Activated naive CD4-positive, alpha-beta T cell treated with anti-CD3 and anti-CD28 coated beads for 36 hours (primary cell): ENCODE measurements at regions of chr10 and their contacts with region 1.

Region 1: DNA sequence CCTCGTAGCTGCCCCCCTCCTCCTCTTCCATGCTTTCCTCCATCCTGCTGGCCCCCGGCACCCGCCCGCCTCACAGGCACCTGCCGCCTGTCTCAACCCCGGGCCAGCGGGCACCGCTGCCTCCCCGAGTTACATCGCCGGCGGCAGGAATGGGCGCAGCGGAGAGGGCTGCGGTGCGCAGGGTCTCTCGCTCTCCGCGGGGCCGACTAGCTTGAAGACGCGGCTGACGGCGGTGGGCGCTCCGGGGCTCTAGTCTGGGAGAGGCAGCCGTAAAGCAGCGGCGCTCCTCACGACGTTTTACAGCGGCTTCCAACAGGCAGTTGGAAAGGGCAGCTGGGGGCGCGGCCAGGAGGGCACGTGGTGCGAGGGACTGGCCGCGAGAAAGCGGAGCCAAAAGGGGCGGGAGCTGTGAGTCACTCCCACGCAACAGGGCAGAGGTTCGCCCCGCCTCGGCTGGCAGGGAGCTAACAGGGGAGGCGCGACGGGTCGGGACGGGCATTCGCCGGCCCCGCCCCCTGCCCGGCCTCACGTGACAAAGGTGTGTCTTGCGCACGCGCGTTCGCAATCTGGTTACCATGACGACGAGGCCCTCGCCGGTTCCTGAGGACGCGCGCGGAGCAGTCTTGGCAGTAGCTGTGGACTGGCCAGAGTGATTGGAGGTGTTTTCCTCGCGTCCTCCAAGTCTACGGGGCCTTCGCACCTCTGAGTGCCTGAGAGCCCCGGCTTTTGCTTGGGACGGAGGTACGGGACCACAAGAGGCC is at the start of gene CACUL1:
- DNase-seq: peak; percentile 99
- H3K4me3 Mint-ChIP-seq: peak within 1 kb of the TSS; percentile 95
- H3K27ac Mint-ChIP-seq: peak within 1 kb of the TSS; percentile 82
- H3K4me1 Mint-ChIP-seq: peaks cover 36% of the 10 kb centered on the region
- H3K27me3 Mint-ChIP-seq: no peaks in the 10 kb centered on the region
- total RNA-seq, gene CACUL1: 18.4 to 19.2 TPM

Region 2: GRCh38 chr10:117653170-117653515 is 1101.8 kb before region 1 on chr10:
- CTCF ChIA-PET with region 1: no interaction called
- intact Hi-C with region 1: loop called (anchors 10 kb)
- DNase-seq: peak; percentile 65
- H3K4me3 Mint-ChIP-seq: no peak overlapping the region
- H3K27ac Mint-ChIP-seq: no peak overlapping the region
- H3K4me1 Mint-ChIP-seq: peaks cover 25% of the 10 kb centered on the region
- H3K27me3 Mint-ChIP-seq: peaks cover 26% of the 10 kb centered on the region

Region 3: DNA sequence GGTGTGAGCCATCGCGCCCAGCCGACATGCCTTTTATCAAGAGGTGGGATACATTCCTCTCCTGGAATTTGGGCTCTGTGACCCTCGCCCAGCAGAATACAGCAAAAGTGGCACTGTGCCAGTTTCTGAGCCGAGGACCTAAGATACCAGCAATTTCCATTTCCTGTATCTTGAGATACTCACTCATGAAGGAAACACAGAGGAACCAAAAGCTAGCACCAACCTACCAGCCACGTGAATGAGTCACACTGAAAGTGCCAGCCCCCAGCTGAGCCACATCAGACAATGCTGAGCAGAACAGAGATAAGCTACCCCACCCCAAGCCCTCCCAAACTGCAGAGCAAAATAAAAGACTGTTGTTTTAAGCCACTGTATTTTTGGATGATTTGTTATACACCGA is 56.5 kb before region 1 on chr10:
- CTCF ChIA-PET with region 1: no interaction called
- intact Hi-C with region 1: loop called (anchors 1 kb)
- DNase-seq: peak; percentile 90
- H3K4me3 Mint-ChIP-seq: no peak overlapping the region
- H3K27ac Mint-ChIP-seq: peak overlapping the region; percentile 32
- H3K4me1 Mint-ChIP-seq: peaks cover 49% of the 10 kb centered on the region
- H3K27me3 Mint-ChIP-seq: no peaks in the 10 kb centered on the region

Region 4: GRCh38 chr10:119028900-119029612 is 274.2 kb after region 1 on chr10:
- CTCF ChIA-PET with region 1: no interaction called
- intact Hi-C with region 1: loop called (anchors 1 kb)
- DNase-seq: peak; percentile 73
- H3K4me3 Mint-ChIP-seq: peak overlapping the region; percentile 66
- H3K27ac Mint-ChIP-seq: no peak overlapping the region
- H3K4me1 Mint-ChIP-seq: peaks cover 16% of the 10 kb centered on the region
- H3K27me3 Mint-ChIP-seq: peaks cover 4% of the 10 kb centered on the region

Region 5: GRCh38 chr10:119178372-119179119 is 423.6 kb after region 1 on chr10 and contains the start of gene PRDX3:
- CTCF ChIA-PET with region 1: no interaction called
- intact Hi-C with region 1: loop called (anchors 1 kb)
- DNase-seq: peak; percentile 96
- H3K4me3 Mint-ChIP-seq: peak within 1 kb of the TSS; percentile 93
- H3K27ac Mint-ChIP-seq: peak within 1 kb of the TSS; percentile 95
- H3K4me1 Mint-ChIP-seq: peaks cover 42% of the 10 kb centered on the region
- H3K27me3 Mint-ChIP-seq: no peaks in the 10 kb centered on the region
- total RNA-seq, gene PRDX3: 215 to 216 TPM

Region 6: DNA sequence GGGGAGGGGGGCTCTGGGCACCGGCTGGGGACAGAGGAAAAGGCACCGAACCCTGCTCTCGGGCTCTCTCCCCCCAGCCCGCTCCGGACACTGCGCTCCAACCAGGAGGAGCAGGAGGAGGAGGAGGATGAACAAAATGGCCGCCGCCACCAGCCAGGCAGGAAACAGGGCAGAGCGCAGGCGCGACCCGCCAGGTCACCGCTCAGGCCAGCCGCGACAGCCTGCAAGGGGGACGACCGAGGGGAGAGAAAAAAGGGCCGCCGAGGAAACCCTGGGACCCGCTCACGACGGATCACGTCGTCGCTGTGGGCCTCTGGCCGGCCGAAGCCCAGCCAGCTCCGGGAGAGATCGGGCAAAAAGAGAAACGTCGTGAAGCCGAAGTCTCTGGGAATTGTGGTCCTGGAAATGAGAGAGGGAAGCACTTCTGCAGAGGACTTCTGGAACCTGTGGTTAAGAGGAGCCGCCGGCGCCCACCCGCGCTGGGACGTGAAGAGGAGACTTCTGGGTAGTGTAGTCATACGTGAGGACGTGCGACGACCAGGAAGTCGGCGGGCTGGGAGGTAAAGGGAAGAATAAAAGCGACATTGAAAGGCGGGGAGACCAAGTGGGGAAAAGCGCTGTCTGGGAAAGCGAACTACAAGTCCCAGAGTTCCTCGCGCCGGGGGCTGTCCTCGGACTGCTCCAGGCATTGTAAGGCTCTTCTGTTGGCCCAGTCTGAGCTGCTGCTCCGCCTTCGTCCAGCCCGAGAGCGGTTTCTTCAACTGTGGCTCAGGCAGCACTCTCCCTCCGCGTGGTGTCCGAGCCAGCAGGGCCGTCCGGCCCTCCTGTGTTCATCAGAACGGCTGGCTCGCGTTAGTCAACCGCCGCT is 841.9 kb after region 1 on chr10 and contains the start of gene TIAL1:
- CTCF ChIA-PET with region 1: no interaction called
- intact Hi-C with region 1: loop called (anchors 1 kb)
- DNase-seq: peak; percentile 98
- H3K4me3 Mint-ChIP-seq: peak within 1 kb of the TSS; percentile 93
- H3K27ac Mint-ChIP-seq: peak within 1 kb of the TSS; percentile 98
- H3K4me1 Mint-ChIP-seq: peaks cover 47% of the 10 kb centered on the region
- H3K27me3 Mint-ChIP-seq: no peaks in the 10 kb centered on the region
- total RNA-seq, gene TIAL1: 184 to 192 TPM

Region 7: GRCh38 chr10:119872860-119873681 is 1118.2 kb after region 1 on chr10:
- CTCF ChIA-PET with region 1: no interaction called
- intact Hi-C with region 1: loop called (anchors 2 kb)
- DNase-seq: peak; percentile 84
- H3K4me3 Mint-ChIP-seq: peak overlapping the region; percentile 83
- H3K27ac Mint-ChIP-seq: peak overlapping the region; percentile 84
- H3K4me1 Mint-ChIP-seq: peaks cover 38% of the 10 kb centered on the region
- H3K27me3 Mint-ChIP-seq: no peaks in the 10 kb centered on the region